ENCODE measurements at regions of chr1 and their contacts with region 1.

Region 1: GRCh38 chr1:205711104-205712020 is 31.1 kb upstream of the SLC45A3 start:
- DNase-seq: peak; percentile 68
- ATAC-seq: peak; percentile 93
- H3K4me3 ChIP-seq: no peak overlapping the region
- H3K27ac ChIP-seq: no peak overlapping the region
- H3K4me1 ChIP-seq: no peaks in the 10 kb centered on the region
- H3K27me3 ChIP-seq: no peaks in the 10 kb centered on the region
- CTCF ChIP-seq: peak; percentile 86 to 92 (median 90)
- POLR2A ChIP-seq: no peak
- RAD21 ChIP-seq: peak; percentile 93

Region 2: DNA sequence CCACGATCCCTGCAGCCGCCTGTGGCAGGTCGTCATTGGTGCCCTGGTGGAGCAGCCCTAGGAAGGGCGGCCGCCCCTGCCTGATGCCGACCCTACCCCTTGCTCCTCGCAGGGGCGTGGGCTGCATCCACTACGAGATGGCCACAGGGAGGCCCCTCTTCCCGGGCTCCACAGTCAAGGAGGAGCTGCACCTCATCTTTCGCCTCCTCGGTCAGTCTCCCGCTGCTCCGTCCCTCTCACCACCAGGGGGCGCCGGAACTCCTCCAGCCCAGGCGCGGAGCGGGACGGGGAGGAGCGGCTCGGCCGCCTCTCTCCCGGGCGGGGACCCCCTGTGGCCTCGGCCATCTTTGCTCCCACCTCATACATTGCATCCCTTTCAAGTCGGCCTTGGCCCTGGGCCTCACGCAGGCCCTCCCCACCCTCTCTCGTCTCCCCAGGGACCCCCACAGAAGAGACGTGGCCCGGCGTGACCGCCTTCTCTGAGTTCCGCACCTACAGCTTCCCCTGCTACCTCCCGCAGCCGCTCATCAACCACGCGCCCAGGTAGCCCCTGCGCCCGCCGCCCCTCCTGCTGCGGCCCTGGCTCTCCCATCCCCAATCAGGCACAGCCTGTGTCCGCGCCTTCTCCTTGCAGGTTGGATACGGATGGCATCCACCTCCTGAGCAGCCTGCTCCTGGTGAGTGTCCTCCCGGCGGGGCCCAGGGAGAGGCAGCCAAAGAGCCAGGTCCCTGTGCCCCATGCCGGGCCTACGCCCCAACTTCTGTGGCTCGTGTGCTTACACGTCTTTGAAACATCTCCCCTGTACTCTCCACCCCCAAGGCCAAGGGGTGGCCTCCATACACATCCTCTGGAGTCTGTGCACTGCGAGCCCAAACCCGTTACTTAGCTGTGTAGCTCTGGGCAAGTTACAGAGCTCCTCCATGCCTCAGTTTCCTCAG is 182.2 kb before region 1 on chr1:
- CTCF ChIA-PET with region 1: interaction called, 4 read pairs
- POLR2A ChIA-PET with region 1: no interaction called
- RAD21 ChIA-PET with region 1: no interaction called
- intact Hi-C with region 1: loop called (anchors 2 kb)
- DNase-seq: peak; percentile 19
- ATAC-seq: peak; percentile 90
- H3K4me3 ChIP-seq: no peak overlapping the region
- H3K27ac ChIP-seq: no peak overlapping the region
- H3K4me1 ChIP-seq: peaks cover 0 to 4% of the 10 kb centered on the region in 2 experiments; a peak in 1 of 4 replicates
- H3K27me3 ChIP-seq: no peaks in the 10 kb centered on the region
- CTCF ChIP-seq: peak; percentile 74 to 89 (median 86)
- POLR2A ChIP-seq: no peak
- RAD21 ChIP-seq: peak; percentile 83

Region 3: DNA sequence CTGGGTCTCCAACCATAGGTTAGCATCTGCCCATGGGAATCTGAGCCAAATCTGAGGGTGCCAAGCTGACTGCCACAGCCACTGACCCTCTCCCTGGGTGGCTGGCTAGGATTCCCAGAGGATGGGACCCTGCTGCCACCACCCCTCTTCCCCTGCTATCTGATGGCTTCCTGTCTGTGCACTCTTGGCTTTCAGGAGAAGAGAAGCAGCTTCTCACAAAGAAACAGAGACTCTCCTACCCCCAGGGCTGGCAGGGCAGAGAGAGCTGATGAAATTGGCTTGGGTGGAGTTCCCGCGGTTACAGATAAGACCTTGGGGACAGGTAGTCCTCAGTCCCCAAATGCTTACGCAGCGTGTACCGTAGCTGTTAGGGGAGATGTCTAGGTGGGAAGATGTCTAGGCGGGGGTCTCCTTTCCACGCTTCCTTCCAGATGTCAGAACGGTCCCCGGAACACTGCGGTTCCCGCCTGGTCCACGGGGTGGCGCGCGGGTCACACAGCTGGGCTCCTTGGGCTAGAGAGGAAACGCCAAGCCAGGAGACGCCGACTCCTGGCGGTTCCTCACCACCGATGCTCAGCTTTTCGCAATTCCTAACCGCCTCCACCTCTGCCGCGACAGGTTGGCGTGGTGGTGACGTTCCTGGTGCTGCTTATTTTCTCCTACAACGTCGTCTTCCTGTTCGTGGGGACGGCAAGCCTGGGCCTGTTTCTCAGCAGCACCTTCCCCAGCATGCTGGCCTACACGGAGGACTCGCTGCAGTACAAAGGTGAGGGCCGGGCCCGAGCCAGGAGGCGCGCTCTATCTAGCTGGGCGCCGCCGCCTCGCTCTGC is 119.6 kb before region 1 on chr1:
- CTCF ChIA-PET with region 1: interaction called, 41 read pairs
- POLR2A ChIA-PET with region 1: no interaction called
- RAD21 ChIA-PET with region 1: interaction called, 3 read pairs
- intact Hi-C with region 1: loop called (anchors 2 kb)
- DNase-seq: peak; percentile 65
- ATAC-seq: peak; percentile 89
- H3K4me3 ChIP-seq: peak overlapping the region; percentile 37 to 53
- H3K27ac ChIP-seq: peak overlapping the region; percentile 14; the same call in 1 of the 2 replicates
- H3K4me1 ChIP-seq: peaks cover 0 to 11% of the 10 kb centered on the region in 2 experiments; a peak in 2 of 4 replicates
- H3K27me3 ChIP-seq: no peaks in the 10 kb centered on the region
- CTCF ChIP-seq: peak; percentile 97 to 98 (median 98)
- POLR2A ChIP-seq: no peak
- RAD21 ChIP-seq: peak; percentile 99

Region 4: DNA sequence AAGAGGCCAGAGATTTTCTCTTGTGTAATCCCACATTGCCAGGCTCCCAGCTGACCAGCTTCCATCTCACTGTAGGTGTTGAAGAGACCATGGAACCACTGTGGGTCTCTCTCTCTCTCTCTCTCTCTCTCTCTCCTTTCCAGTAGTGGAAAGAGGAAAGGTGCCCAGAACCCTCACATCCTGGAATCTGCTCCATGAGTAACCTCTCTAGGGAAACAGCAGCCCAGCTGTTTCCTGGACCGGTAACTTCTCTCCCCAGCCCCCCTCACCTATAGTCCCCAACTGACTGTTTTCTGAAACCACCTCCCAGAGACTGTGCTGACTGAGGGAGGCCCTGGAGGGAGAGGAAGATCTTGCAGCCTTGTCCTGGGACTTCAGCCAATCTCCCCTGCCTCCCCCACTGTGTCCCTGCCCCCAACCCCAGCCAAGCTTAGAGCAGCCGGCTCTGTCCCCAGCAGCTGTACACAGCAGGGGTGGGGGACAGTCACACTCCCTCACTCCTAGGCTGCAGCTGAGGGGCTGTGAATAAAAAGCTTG is 10.4 kb before region 1 on chr1:
- CTCF ChIA-PET with region 1: interaction called, 10 read pairs
- POLR2A ChIA-PET with region 1: no interaction called
- RAD21 ChIA-PET with region 1: no interaction called
- intact Hi-C with region 1: no loop called
- DNase-seq: no peak
- ATAC-seq: no peak
- H3K4me3 ChIP-seq: no peak overlapping the region
- H3K27ac ChIP-seq: no peak overlapping the region
- H3K4me1 ChIP-seq: no peaks in the 10 kb centered on the region
- H3K27me3 ChIP-seq: no peaks in the 10 kb centered on the region
- CTCF ChIP-seq: no peak
- POLR2A ChIP-seq: no peak
- RAD21 ChIP-seq: no peak

Region 5: DNA sequence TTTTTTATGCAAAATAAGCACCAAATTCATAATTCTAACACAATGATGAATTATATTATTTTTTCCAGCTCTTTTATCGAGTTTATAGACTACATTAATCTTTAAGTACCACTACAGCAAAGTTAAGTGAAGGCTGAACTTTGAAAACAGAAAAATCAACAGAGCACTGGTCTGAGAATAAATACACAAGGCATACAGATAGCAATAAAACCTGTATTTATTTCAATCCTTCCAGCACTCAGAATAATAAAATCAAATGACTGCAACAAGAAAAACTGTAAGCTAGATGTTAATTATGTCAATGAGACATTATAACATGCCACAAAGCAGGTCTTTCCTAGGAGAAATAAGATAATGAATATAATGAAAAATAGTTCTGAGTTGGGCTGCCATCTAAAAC is 14.2 kb after region 1 on chr1:
- CTCF ChIA-PET with region 1: interaction called, 10 read pairs
- POLR2A ChIA-PET with region 1: no interaction called
- RAD21 ChIA-PET with region 1: no interaction called
- intact Hi-C with region 1: no loop called
- DNase-seq: no peak
- ATAC-seq: no peak
- H3K4me3 ChIP-seq: no peak overlapping the region
- H3K27ac ChIP-seq: no peak overlapping the region
- H3K4me1 ChIP-seq: peaks cover 0 to 4% of the 10 kb centered on the region in 2 experiments; a peak in 1 of 4 replicates
- H3K27me3 ChIP-seq: no peaks in the 10 kb centered on the region
- CTCF ChIP-seq: no peak
- POLR2A ChIP-seq: no peak
- RAD21 ChIP-seq: no peak

Region 6: DNA sequence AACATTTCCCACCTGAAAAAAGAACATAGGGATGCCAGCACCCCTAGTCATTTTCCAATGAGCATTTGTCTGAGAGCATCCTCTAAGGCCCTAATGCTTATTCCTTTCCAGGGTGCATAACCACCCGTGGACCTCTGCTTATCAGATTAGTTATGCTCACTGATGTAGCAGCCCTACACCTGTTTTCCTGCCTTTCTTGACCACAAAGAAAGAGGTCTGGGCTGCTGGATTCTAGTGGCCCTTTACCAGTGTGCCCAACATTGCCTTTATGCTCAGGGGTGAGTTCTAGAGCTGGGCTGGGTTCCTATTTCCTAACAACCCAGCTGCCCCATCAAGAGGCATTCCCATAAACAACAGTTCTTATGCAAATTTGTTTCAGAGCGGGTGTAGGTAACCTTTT is 158.9 kb after region 1 on chr1:
- CTCF ChIA-PET with region 1: no interaction called
- POLR2A ChIA-PET with region 1: no interaction called
- RAD21 ChIA-PET with region 1: no interaction called
- intact Hi-C with region 1: no loop called
- DNase-seq: no peak
- ATAC-seq: no peak
- H3K4me3 ChIP-seq: no peak overlapping the region
- H3K27ac ChIP-seq: no peak overlapping the region
- H3K4me1 ChIP-seq: no peaks in the 10 kb centered on the region
- H3K27me3 ChIP-seq: no peaks in the 10 kb centered on the region
- CTCF ChIP-seq: no peak
- POLR2A ChIP-seq: no peak
- RAD21 ChIP-seq: no peak